ENCODE measurements at regions of chr11 and their contacts with region 1.

Region 1: GRCh38 chr11:86869966-86870570 is 69.7 kb downstream of the PRSS23 start:
- DNase-seq: peak in 7 of 10 donors; percentile 23 to 87 (median 52)

Region 2: DNA sequence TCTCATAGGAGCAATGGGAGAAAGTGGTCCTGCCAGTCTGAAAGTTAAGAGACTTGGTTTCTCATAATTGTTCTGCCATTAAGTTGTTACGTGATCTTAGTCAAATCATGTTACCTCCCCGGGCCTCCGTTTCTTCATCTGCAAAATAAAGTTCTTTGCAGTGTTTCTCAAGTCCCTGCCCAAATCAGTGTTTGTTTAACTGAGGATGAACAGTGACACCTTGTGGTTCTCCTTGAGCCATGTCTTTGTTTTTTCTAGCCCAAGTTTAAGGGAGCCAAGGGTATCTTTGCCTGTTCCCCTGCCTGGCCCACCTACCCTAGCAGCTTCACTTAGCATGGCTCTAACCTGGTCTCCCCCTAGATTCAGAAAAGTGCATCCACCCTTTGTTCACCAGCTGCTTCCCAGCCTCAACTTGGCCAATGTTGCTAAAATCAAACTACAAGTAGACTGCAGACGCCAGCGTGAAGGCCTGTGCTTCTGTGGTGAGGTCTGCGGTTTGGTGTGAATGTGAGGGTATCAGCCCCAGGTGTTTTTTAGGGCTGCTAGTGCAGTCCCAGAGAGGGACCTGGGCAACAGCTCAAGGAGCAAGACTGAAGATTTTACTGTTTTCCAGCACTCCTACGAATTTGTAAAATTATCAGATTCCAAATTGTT is 49.6 kb after region 1 on chr11:
- intact Hi-C with region 1: loop called (anchors 1 kb)
- DNase-seq: no peak

Region 3: GRCh38 chr11:87324817-87325489 is 454.9 kb after region 1 on chr11:
- intact Hi-C with region 1: no loop called
- DNase-seq: no peak

Measured in posterior cingulate gyrus (tissue), 11 donors.